Ovary (tissue), 10 donors: ENCODE measurements at regions of chr13 and their contacts with region 1.

Region 1: DNA sequence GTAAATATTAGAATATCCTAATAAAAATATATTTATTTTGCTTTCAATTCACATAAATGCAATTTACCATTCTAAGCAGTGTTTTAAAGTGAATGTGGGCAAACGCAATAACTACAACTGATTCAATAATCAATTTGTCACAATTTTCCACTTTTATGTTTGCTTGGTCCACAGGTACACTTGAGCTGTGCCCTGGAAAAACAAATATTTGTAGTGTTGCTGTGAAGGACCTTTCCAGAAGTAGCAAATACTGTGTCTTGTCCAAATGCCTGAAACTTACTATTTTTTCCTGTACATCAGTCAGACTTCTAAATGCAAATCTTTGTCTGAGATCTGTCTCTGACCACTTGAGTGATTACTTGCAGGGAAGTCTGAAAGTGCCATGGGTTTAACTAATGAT is 845.8 kb upstream of the SLITRK5 start:
- DNase-seq: no peak
- H3K4me3 ChIP-seq: no peak overlapping the region
- H3K27ac ChIP-seq: no peak overlapping the region
- H3K4me1 ChIP-seq: no peaks in the 10 kb centered on the region
- H3K27me3 ChIP-seq: no peaks in the 10 kb centered on the region
- CTCF ChIP-seq: no peak
- EP300 ChIP-seq: no peak
- POLR2A ChIP-seq: no peak

Region 2: DNA sequence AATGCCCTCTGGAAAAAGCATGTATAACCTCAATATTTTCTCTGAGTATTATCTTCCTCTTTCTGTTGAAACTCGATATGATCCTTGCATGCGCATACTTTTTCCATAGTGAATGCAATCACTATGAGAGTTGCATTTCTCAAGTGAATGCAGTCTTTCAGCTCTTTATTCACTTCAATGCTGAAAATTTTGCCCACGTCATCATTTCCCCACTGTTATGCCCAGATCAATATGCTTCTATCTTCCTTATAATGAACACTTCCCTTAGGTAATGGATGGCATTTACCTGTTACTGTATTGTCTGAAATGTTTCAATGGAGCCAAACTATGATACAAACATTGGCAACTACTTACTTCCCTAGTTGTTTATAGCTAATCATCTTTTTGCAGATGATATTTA is 159.6 kb before region 1 on chr13:
- intact Hi-C with region 1: loop called in 1 of 4 experiments (anchors 5 kb)
- DNase-seq: no peak
- H3K4me3 ChIP-seq: no peak overlapping the region
- H3K27ac ChIP-seq: no peak overlapping the region
- H3K4me1 ChIP-seq: no peaks in the 10 kb centered on the region
- H3K27me3 ChIP-seq: no peaks in the 10 kb centered on the region
- CTCF ChIP-seq: no peak
- EP300 ChIP-seq: no peak
- POLR2A ChIP-seq: no peak

Region 3: GRCh38 chr13:86856991-86857390 is 31.6 kb after region 1 on chr13:
- intact Hi-C with region 1: no loop called
- DNase-seq: no peak
- H3K4me3 ChIP-seq: no peak overlapping the region
- H3K27ac ChIP-seq: no peak overlapping the region
- H3K4me1 ChIP-seq: no peaks in the 10 kb centered on the region
- H3K27me3 ChIP-seq: no peaks in the 10 kb centered on the region
- CTCF ChIP-seq: no peak
- EP300 ChIP-seq: no peak
- POLR2A ChIP-seq: no peak